ENCODE measurements at regions of chr19 and their contacts with region 1.

Region 1: DNA sequence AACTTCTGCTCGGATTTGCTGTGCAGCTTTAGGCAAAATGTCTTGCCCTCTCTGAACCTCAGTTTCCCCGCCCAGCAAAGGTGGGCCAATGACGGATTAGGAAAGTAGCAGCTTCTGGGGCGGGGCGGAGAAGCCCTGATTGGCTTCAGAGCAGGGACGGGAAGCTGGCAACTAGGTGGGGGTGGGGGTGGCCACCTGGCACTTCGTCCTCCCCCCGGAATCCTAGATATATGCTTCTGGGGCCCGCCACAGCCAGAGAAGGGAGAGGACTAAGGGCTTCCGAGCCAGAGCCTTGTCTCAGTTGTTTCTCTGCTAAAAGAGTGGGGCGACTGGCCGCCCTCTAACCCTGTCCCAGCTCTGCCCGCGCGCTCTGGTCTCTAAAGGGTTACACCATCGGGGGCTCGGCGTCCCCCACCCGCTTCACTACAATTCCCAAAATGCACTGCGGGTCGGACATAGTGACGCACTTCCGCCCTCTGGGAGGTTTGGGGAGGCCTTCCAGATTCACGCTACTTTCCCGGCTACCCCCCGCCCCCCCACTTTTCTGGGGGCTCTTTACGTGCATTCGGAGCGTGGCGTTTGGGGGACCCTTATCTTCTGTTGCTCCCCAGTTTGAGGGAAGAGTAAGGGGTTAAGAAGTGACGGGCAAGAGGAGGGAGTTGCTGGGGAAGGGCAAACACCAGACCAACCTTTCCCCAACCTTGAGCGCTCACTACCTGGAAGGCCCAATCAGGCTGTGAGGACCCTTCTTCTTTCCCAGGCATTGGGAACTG is 672 bp upstream of the IRF2BP1 start:
- DNase-seq: peak; percentile 90
- CTCF ChIP-seq: no peak

Region 2: GRCh38 chr19:45870798-45871197 is 15.8 kb before region 1 on chr19:
- CTCF ChIA-PET with region 1: interaction called, 152 read pairs
- POLR2A ChIA-PET with region 1: no interaction called
- DNase-seq: no peak
- CTCF ChIP-seq: no peak

Region 3: DNA sequence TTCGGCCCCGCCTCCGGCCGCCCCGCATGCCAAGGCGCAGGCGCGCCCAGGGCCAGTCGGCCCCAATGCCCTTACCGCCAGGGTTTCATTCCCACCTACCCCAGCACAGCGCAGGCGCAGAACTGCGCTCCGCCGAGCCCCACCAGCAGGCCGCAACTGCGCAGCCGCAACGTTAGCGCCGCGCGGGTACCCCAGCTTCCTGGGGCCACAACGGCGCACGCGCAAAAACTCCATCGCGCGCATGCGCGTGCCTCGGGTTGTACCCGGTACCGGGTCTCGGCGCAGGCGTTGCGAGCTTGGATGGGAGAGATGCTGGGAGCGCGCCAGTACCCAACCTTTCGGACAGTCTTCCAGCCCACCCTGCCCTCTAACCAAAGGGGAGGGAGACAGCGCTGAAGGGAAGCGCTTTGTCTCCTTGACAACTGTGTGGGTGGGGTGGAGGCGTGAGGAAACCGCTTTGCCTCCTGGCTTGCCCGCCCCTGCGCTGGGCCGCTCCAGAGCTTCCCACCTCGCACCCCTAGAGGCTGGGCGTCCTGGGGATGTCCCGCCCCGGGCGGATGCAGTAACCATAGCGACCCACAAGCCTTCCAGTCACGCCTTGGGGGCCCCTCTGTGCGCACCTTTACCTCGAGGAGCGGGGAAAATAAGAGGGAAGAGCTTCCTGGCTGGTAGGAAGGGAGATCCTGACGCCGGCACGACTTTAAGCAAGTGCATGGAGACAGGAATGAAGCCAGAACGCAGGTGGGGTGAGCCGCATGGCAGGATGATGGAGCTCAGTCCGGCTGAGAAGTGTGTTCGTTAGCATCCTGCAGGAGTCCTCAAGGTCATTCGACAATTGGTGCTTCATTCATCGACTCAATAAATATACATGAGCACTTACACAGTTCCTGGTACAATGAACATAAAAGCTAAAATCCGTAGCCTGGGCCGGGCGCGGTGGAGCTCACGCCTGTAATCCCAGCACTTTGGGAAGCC is 16.3 kb after region 1 on chr19:
- CTCF ChIA-PET with region 1: interaction called, 18 read pairs
- POLR2A ChIA-PET with region 1: no interaction called
- DNase-seq: peak; percentile 100
- CTCF ChIP-seq: no peak

Region 4: GRCh38 chr19:45967246-45967645 is 80.6 kb after region 1 on chr19:
- CTCF ChIA-PET with region 1: no interaction called
- POLR2A ChIA-PET with region 1: no interaction called
- DNase-seq: no peak
- CTCF ChIP-seq: no peak

Measured in GM10248 (cell line).